CD4-positive, alpha-beta memory T cell (primary cell): ENCODE measurements at regions of chr17 and their contacts with region 1.

Region 1: GRCh38 chr17:63714547-63715277 is 14.8 kb upstream of the LIMD2 start:
- DNase-seq: no peak
- H3K4me3 ChIP-seq: no peak overlapping the region
- H3K4me3 Mint-ChIP-seq: no peak overlapping the region
- H3K27ac ChIP-seq: no peak overlapping the region
- H3K27ac Mint-ChIP-seq: peak overlapping the region in 3 of 7 donors; percentile 6 to 42 (median 7)
- H3K4me1 ChIP-seq: peaks cover 12% of the 10 kb centered on the region
- H3K4me1 Mint-ChIP-seq: peaks cover 10 to 20% (median 13%) of the 10 kb centered on the region in 4 donors
- H3K27me3 ChIP-seq: no peaks in the 10 kb centered on the region
- H3K27me3 Mint-ChIP-seq: no peaks in the 10 kb centered on the region

Region 2: DNA sequence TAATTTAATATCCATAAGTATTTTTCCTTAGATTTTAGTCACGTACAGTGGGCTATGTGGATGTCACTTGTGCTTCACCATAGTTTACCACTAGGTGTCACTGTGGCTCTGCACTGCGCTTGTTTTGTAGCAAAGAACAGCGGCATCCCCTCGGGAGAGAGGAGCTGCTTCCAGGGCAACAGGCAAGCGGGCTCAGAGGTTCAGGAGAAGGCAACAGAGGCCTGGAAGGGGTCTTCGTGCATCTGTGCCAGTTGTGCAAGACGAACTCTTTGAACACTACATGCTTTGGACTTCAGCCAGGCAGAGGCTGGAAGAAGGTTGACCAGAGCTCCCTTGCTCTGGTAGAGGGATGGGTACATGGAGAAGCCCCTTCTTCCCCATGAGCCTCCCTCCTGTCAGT is 289.2 kb before region 1 on chr17:
- CTCF ChIA-PET with region 1: interaction called, 30 read pairs
- POLR2A ChIA-PET with region 1: interaction called, 10 read pairs
- intact Hi-C with region 1: loop called (anchors 1 kb)
- DNase-seq: peak; percentile 68 to 74 (median 72)
- H3K4me3 ChIP-seq: no peak overlapping the region
- H3K4me3 Mint-ChIP-seq: peak overlapping the region; percentile 32 to 82 (median 48)
- H3K27ac ChIP-seq: no peak overlapping the region
- H3K27ac Mint-ChIP-seq: peak overlapping the region in 5 of 7 donors; percentile 47 to 87 (median 67)
- H3K4me1 ChIP-seq: peaks cover 49% of the 10 kb centered on the region
- H3K4me1 Mint-ChIP-seq: peaks cover 26 to 54% (median 44%) of the 10 kb centered on the region in 4 donors
- H3K27me3 ChIP-seq: no peaks in the 10 kb centered on the region
- H3K27me3 Mint-ChIP-seq: no peaks in the 10 kb centered on the region